Ovary (tissue), 10 donors: ENCODE measurements at regions of chr4 and their contacts with region 1.

Region 1: GRCh38 chr4:88366460-88366859 is 12.2 kb upstream of the HERC6 start:
- DNase-seq: no peak
- H3K4me3 ChIP-seq: no peak overlapping the region
- H3K27ac ChIP-seq: no peak overlapping the region
- H3K4me1 ChIP-seq: no peaks in the 10 kb centered on the region
- H3K27me3 ChIP-seq: no peaks in the 10 kb centered on the region
- CTCF ChIP-seq: no peak
- EP300 ChIP-seq: no peak
- POLR2A ChIP-seq: no peak

Region 2: DNA sequence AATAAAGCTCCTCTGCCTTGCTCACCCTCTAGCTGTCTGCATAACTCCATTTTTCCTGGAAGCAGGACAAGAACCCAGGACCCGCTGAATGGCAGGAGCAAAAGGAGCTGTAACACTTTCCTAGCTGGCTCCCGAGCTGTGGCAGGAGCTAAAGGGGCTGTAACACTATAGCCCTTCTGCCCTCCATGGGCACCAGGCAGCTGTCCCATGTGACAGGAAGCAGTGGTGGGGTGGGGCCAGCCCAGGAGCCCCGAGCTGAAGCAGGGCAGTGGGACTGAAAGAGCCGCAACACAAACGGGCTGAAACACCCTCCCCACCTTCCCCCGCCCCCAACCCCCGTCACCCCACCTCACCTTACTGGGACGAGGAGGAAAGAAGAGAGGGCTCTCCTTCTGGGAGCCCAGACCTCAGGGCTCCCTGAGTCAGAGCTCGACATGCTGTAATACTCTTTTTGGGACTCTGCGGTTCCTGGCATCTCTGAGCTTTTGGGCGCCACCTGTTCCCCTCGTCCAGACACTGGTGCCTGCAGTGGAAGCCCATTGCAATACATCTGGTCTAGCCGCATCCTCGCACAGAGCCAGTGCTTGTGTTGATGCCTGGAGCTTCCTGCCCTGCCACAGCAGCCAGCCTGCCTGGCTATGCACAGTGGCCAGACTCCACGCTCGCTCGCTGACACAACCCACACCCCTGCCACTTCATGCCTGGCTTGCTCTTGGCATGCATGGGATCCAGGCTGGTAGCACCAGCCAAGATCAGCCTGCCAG is 121.5 kb before region 1 on chr4:
- intact Hi-C with region 1: loop called in 1 of 4 experiments (anchors 10 kb)
- DNase-seq: no peak
- H3K4me3 ChIP-seq: no peak overlapping the region
- H3K27ac ChIP-seq: no peak overlapping the region
- H3K4me1 ChIP-seq: peaks cover 2% of the 10 kb centered on the region
- H3K27me3 ChIP-seq: no peaks in the 10 kb centered on the region
- CTCF ChIP-seq: no peak
- EP300 ChIP-seq: no peak
- POLR2A ChIP-seq: no peak

Region 3: GRCh38 chr4:88514557-88515511 is 148.4 kb after region 1 on chr4:
- intact Hi-C with region 1: loop called in 2 of 4 experiments (anchors 10 kb)
- DNase-seq: no peak
- H3K4me3 ChIP-seq: no peak overlapping the region
- H3K27ac ChIP-seq: no peak overlapping the region
- H3K4me1 ChIP-seq: no peaks in the 10 kb centered on the region
- H3K27me3 ChIP-seq: no peaks in the 10 kb centered on the region
- CTCF ChIP-seq: no peak
- EP300 ChIP-seq: no peak
- POLR2A ChIP-seq: no peak